GM12878 (cell line): ENCODE measurements at regions of chr12 and their contacts with region 1.

Region 1: GRCh38 chr12:69900720-69901131 is 75.7 kb downstream of the MYRFL start:
- DNase-seq: no peak
- ATAC-seq: peak; percentile 88
- H3K4me3 ChIP-seq: no peak overlapping the region
- H3K27ac ChIP-seq: no peak overlapping the region
- H3K4me1 ChIP-seq: no peaks in the 10 kb centered on the region
- H3K27me3 ChIP-seq: no peaks in the 10 kb centered on the region
- CTCF ChIP-seq: peak; percentile 58 to 74 (median 66)
- EP300 ChIP-seq: no peak
- POLR2A ChIP-seq: no peak
- RAD21 ChIP-seq: peak; percentile 88

Region 2: GRCh38 chr12:69885658-69886057 is 15.1 kb before region 1 on chr12:
- CTCF ChIA-PET with region 1: interaction called, 38 read pairs
- POLR2A ChIA-PET with region 1: no interaction called
- RAD21 ChIA-PET with region 1: interaction called, 7 read pairs
- SMC1A ChIA-PET with region 1: interaction called, 11 read pairs
- in situ Hi-C with region 1: no loop called
- intact Hi-C with region 1: no loop called
- DNase-seq: no peak
- ATAC-seq: peak; percentile 86
- H3K4me3 ChIP-seq: no peak overlapping the region
- H3K27ac ChIP-seq: no peak overlapping the region
- H3K4me1 ChIP-seq: no peaks in the 10 kb centered on the region; the same call in 1 of the 2 replicates
- H3K27me3 ChIP-seq: no peaks in the 10 kb centered on the region
- CTCF ChIP-seq: no peak
- EP300 ChIP-seq: no peak
- POLR2A ChIP-seq: no peak
- RAD21 ChIP-seq: no peak

Region 3: GRCh38 chr12:69981881-69982475 is 81.3 kb after region 1 on chr12:
- CTCF ChIA-PET with region 1: no interaction called
- POLR2A ChIA-PET with region 1: no interaction called
- RAD21 ChIA-PET with region 1: no interaction called
- SMC1A ChIA-PET with region 1: no interaction called
- in situ Hi-C with region 1: no loop called
- intact Hi-C with region 1: no loop called
- DNase-seq: no peak
- ATAC-seq: no peak
- H3K4me3 ChIP-seq: no peak overlapping the region
- H3K27ac ChIP-seq: no peak overlapping the region
- H3K4me1 ChIP-seq: no peaks in the 10 kb centered on the region
- H3K27me3 ChIP-seq: no peaks in the 10 kb centered on the region
- CTCF ChIP-seq: no peak
- EP300 ChIP-seq: no peak
- POLR2A ChIP-seq: no peak
- RAD21 ChIP-seq: no peak

Region 4: DNA sequence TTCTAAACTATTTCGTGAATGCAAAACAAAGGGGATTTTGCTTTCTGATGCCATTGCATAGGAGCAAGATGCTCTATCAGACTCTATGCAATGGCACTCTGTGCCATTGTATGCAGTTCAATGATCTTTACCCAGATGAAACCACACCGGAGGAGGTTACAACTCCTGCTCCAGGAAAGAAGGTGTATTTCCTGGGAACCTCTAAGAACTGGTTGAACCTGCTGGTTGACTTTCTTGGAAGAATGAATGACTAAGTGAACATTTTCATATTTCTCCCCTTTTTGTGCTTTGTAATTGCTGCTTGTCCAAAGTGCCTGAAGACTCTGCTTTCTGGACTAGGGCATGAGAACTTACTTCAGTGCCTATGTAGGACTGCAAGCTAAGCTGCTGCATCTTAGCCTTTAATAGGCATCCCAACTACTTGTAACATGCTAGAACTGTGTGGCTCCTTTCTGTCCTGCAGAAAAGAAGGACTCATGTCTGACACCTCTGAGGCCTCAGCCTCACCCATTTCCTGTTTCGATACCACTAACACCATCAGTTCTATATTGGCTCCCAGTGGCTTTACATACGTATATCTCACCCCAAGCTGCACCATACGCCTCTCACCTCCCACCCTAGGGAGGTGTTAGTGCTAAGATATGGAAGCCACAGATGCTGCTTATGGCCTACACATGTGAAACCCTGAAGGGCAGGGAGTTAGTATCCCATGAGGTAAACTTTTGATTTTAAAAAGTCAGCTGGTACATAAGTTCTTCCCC is 149.1 kb after region 1 on chr12:
- CTCF ChIA-PET with region 1: interaction called, 8 read pairs
- POLR2A ChIA-PET with region 1: no interaction called
- RAD21 ChIA-PET with region 1: interaction called, 3 read pairs
- SMC1A ChIA-PET with region 1: no interaction called
- in situ Hi-C with region 1: no loop called
- intact Hi-C with region 1: loop called (anchors 2 kb)
- DNase-seq: peak; percentile 68
- ATAC-seq: peak; percentile 95
- H3K4me3 ChIP-seq: no peak overlapping the region
- H3K27ac ChIP-seq: no peak overlapping the region
- H3K4me1 ChIP-seq: peaks cover 21% of the 10 kb centered on the region
- H3K27me3 ChIP-seq: no peaks in the 10 kb centered on the region; a peak in 1 of 4 replicates
- CTCF ChIP-seq: no peak
- EP300 ChIP-seq: peak; percentile 87 to 90; a peak in 3 of 4 replicates
- POLR2A ChIP-seq: no peak
- RAD21 ChIP-seq: no peak

Region 5: GRCh38 chr12:70928071-70928470 is 1027.3 kb after region 1 on chr12:
- CTCF ChIA-PET with region 1: no interaction called
- POLR2A ChIA-PET with region 1: no interaction called
- RAD21 ChIA-PET with region 1: no interaction called
- SMC1A ChIA-PET with region 1: no interaction called
- in situ Hi-C with region 1: no loop called
- intact Hi-C with region 1: no loop called
- DNase-seq: no peak
- ATAC-seq: no peak
- H3K4me3 ChIP-seq: no peak overlapping the region
- H3K27ac ChIP-seq: no peak overlapping the region
- H3K4me1 ChIP-seq: no peaks in the 10 kb centered on the region
- H3K27me3 ChIP-seq: no peaks in the 10 kb centered on the region
- CTCF ChIP-seq: no peak
- EP300 ChIP-seq: no peak
- POLR2A ChIP-seq: no peak
- RAD21 ChIP-seq: no peak